ENCODE measurements at regions of chr7 and their contacts with region 1.

Region 1: GRCh38 chr7:12350971-12351370 is 52.7 kb downstream of the VWDE start:
- DNase-seq: no peak
- H3K4me3 ChIP-seq: no peak overlapping the region
- H3K27ac ChIP-seq: no peak overlapping the region
- H3K4me1 ChIP-seq: no peaks in the 10 kb centered on the region
- H3K27me3 ChIP-seq: no peaks in the 10 kb centered on the region
- CTCF ChIP-seq: no peak

Region 2: GRCh38 chr7:11221984-11222383 is 1129.0 kb before region 1 on chr7:
- CTCF ChIA-PET with region 1: interaction called, 13 read pairs
- POLR2A ChIA-PET with region 1: no interaction called
- intact Hi-C with region 1: no loop called
- DNase-seq: no peak
- H3K4me3 ChIP-seq: no peak overlapping the region
- H3K27ac ChIP-seq: no peak overlapping the region
- H3K4me1 ChIP-seq: no peaks in the 10 kb centered on the region
- H3K27me3 ChIP-seq: no peaks in the 10 kb centered on the region
- CTCF ChIP-seq: no peak

Region 3: DNA sequence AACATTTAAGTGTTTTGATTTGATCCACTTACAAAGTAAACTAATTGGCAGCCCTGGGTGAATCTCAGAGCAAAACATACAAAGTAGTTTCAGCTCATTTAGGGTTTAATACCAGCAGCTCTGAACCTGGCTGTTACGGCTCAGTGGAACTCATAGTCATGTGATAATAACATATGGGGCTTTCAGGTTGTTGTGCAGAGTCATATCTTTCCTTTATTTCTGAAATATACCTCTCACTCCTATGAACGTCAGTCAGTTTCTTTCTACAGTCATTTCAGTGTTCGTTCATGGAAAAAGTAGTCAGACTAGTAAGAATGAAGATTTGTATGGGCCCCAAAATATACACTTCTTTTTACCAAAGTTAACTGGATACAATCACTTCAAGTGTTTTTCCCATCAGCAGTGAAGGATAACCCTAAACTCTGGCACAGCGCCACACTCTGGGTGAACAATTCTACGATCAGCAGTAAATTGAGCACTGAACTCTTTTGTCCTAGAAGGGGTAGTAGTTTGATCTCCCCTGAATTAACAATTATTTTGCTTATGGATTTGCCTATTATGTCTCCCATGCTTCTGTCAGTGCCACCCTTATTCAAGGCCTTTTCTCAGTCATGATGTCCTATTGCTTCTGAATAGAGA is 737.6 kb before region 1 on chr7:
- CTCF ChIA-PET with region 1: no interaction called
- POLR2A ChIA-PET with region 1: no interaction called
- intact Hi-C with region 1: no loop called
- DNase-seq: no peak
- H3K4me3 ChIP-seq: no peak overlapping the region
- H3K27ac ChIP-seq: no peak overlapping the region
- H3K4me1 ChIP-seq: no peaks in the 10 kb centered on the region
- H3K27me3 ChIP-seq: no peaks in the 10 kb centered on the region
- CTCF ChIP-seq: no peak

Region 4: GRCh38 chr7:12146813-12147212 is 204.2 kb before region 1 on chr7:
- CTCF ChIA-PET with region 1: no interaction called
- POLR2A ChIA-PET with region 1: no interaction called
- intact Hi-C with region 1: no loop called
- DNase-seq: no peak
- H3K4me3 ChIP-seq: no peak overlapping the region
- H3K27ac ChIP-seq: no peak overlapping the region
- H3K4me1 ChIP-seq: no peaks in the 10 kb centered on the region
- H3K27me3 ChIP-seq: no peaks in the 10 kb centered on the region
- CTCF ChIP-seq: no peak

Measured in PC-9 (cell line).